Naive thymus-derived CD8-positive, alpha-beta T cell (primary cell): ENCODE measurements at regions of chr16 and their contacts with region 1.

Region 1: DNA sequence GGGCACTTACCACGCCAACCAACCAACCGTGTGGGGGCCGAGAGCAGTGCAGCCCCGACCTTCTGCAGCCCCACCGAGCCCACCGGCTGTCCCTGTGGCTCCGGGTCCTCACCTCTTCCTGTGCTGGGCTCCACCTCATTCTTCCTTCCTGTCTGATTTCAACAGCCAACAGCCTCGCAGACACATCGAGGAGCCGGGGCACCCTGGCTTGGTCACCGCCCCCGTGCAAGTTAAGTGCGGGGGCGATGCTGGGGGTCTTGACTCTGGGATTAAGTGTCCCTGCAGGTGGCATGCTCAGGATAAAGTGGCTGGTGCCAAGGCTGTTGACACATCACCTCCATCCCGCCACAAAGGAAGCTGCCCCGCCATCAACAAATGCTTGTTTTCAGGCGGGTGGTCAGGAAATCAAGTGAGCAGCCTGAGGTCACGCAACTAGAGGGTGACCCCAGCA is at the start of gene NLRC3:
- DNase-seq: peak in 8 of 10 donors; percentile 31 to 73 (median 56)
- ATAC-seq: peak; percentile 70 to 73
- H3K4me3 Mint-ChIP-seq: peak within 1 kb of the TSS; percentile 93 to 100 (median 98)
- H3K27ac Mint-ChIP-seq: peak within 1 kb of the TSS; percentile 95 to 98 (median 97)
- H3K4me1 Mint-ChIP-seq: peaks cover 30 to 79% (median 70%) of the 10 kb centered on the region in 4 donors
- H3K27me3 Mint-ChIP-seq: no peaks in the 10 kb centered on the region
- polyA plus RNA-seq, gene NLRC3: 17.1 to 31.9 (median 19.7) TPM

Region 2: GRCh38 chr16:3509470-3509928 is 67.8 kb before region 1 on chr16:
- POLR2A ChIA-PET with region 1: interaction called, 10 read pairs
- DNase-seq: peak; percentile 64 to 92 (median 80)
- ATAC-seq: peak; percentile 99 to 100
- H3K4me3 Mint-ChIP-seq: peak overlapping the region; percentile 20 to 76 (median 59)
- H3K27ac Mint-ChIP-seq: peak overlapping the region; percentile 36 to 97 (median 90)
- H3K4me1 Mint-ChIP-seq: peaks cover 25 to 74% (median 58%) of the 10 kb centered on the region in 4 donors
- H3K27me3 Mint-ChIP-seq: no peaks in the 10 kb centered on the region

Region 3: DNA sequence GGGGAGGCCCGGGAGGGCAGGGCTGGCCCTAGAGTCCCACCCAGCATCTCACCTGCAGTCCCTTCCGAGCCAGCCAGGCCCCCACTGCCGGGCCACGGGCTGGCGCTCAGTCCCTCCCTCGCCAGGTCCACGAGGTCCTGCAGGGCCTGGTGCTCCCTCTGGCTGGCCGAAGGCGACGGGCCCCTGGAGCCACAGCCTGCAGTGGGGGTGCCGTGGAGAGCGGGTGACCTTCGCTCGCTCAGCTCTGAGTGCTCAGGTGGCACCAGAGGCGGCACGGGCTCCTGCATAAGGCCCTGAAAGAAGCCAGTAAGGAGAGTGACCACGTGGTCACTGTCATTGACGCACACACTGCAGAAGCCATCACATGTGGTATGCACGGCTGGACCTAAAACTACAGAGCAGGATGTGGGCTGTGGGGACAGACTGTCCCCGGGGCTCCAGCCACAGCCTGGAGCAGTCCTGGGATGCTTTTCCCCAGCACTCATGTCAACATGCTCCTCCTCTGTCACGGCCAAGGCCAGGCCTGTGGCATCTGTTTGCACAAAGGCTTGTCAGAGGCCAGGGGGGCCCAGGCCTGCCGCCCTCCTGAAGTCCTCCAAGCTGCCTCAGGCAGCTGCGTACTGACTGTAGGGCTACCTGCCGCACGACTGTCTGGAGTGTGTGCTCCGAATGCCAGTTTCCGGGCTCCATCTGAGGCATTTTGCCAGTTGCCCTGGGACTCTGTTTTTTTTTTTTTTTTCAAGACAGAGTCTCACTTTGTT is 19.0 kb after region 1 on chr16:
- POLR2A ChIA-PET with region 1: no interaction called
- DNase-seq: no peak
- ATAC-seq: no peak
- H3K4me3 Mint-ChIP-seq: no peak overlapping the region
- H3K27ac Mint-ChIP-seq: no peak overlapping the region
- H3K4me1 Mint-ChIP-seq: peaks cover 0 to 6% (median 0%) of the 10 kb centered on the region in 4 donors
- H3K27me3 Mint-ChIP-seq: no peaks in the 10 kb centered on the region

Region 4: DNA sequence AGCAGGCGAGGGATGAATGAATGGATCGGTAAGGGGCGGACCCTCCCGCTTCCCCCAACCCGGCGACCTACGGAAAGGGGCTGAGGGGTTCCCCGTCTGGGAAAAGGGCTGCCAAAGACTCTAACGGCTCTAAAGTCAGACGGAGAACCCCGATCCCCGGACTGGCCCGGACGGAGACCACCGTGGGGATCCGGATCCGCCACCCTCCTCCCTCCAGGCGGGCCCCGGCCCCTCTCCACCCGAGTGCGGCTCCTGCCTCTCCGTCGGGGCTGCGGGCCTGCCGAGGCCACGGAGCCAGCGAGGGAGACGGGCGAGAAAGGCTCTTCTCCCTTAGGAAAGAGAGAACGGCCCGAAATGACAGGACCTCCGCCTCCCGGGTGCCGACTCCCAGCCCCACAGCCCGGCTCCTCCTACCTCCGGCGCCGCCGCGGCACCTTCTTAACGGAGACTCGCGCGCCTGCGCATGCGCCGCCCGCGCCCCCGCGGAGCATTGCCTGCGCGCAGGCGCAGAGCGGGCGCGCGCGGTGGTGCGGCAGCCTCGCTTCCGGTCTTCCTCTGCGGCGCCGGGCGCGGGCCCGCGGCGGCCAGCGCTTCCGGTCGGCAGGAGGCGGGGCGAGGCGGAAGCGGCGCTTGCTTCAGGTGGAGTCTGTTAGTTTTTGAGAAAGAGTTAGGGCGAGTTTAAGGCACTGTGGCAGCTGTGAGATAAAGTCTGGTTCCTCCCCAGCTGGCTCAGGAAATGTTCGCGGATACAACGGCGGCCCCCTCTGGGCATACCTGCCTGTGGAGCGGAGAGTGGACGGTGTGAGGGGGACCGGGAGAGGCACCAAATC is 34.0 kb after region 1 on chr16 and contains the start of gene SLX4:
- POLR2A ChIA-PET with region 1: interaction called, 11 read pairs
- DNase-seq: peak; percentile 86 to 96 (median 92)
- ATAC-seq: peak; percentile 85 to 89
- H3K4me3 Mint-ChIP-seq: peak within 1 kb of the TSS; percentile 92 to 100 (median 99)
- H3K27ac Mint-ChIP-seq: peak within 1 kb of the TSS; percentile 93 to 100 (median 97)
- H3K4me1 Mint-ChIP-seq: peaks cover 30 to 64% (median 60%) of the 10 kb centered on the region in 4 donors
- H3K27me3 Mint-ChIP-seq: no peaks in the 10 kb centered on the region
- polyA plus RNA-seq, gene SLX4: 0.32 to 1.2 (median 0.43) TPM

Region 5: GRCh38 chr16:3645504-3646347 is 68.4 kb after region 1 on chr16:
- POLR2A ChIA-PET with region 1: no interaction called
- DNase-seq: no peak
- ATAC-seq: no peak
- H3K4me3 Mint-ChIP-seq: no peak overlapping the region
- H3K27ac Mint-ChIP-seq: peak overlapping the region in 4 of 10 donors; percentile 19 to 62 (median 34)
- H3K4me1 Mint-ChIP-seq: peaks cover 0 to 2% (median 1%) of the 10 kb centered on the region in 4 donors
- H3K27me3 Mint-ChIP-seq: no peaks in the 10 kb centered on the region